Transverse colon (tissue), 4 donors: ENCODE measurements at regions of chr16 and their contacts with region 1.

Region 1: DNA sequence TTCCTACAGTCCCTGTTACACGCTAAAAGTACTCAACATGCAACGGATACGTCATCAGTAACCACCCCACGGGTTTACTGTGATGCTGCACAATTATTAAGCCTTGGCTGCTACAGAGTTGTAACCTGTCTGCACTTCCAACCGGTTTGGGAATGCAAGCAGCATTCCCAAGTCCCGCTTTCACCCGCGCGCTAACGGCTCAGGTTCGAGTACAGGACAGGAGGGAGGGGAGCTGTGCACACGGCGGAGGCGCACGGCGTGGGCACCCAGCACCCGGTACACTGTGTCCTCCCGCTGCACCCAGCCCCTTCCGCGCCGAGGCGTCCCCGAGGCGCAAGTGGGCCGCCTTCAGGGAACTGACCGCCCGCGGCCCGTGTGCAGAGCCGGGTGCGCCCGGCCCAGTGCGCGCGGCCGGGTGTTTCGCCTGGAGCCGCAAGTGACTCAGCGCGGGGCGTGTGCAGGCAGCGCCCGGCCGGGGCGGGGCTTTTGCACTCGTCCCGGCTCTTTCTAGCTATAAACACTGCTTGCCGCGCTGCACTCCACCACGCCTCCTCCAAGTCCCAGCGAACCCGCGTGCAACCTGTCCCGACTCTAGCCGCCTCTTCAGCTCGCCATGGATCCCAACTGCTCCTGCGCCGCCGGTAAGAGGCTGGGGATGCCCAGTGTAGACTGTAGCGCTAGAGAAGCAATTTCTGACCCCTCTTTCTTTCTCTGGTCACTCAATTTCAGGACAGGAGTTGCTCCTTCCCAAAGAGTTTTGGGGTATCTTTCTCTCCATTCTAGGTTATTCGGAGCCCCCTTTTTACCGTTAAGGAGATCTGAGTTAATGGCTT is at the start of gene MT2A:
- DNase-seq: peak; percentile 96
- H3K4me3 ChIP-seq: peak within 1 kb of the TSS; percentile 45 to 75 (median 56)
- H3K27ac ChIP-seq: peak within 1 kb of the TSS; percentile 87 to 91 (median 90)
- H3K4me1 ChIP-seq: peaks cover 6 to 25% (median 19%) of the 10 kb centered on the region in 4 donors
- H3K27me3 ChIP-seq: no peaks in the 10 kb centered on the region
- CTCF ChIP-seq: no peak
- EP300 ChIP-seq: peak; percentile 95
- POLR2A ChIP-seq: peak; percentile 99
- total RNA-seq, gene MT2A: 68.8 to 459 (median 89.3) TPM

Region 2: GRCh38 chr16:56625140-56625942 is 17.1 kb after region 1 on chr16 and contains the start of gene MT1E:
- in situ Hi-C with region 1: no loop called
- intact Hi-C with region 1: loop called (anchors 2 kb)
- DNase-seq: peak; percentile 83
- H3K4me3 ChIP-seq: peak within 1 kb of the TSS; percentile 38 to 61 (median 54)
- H3K27ac ChIP-seq: peak within 1 kb of the TSS; percentile 85 to 90 (median 90)
- H3K4me1 ChIP-seq: peaks cover 0 to 22% (median 17%) of the 10 kb centered on the region in 4 donors
- H3K27me3 ChIP-seq: no peaks in the 10 kb centered on the region
- CTCF ChIP-seq: no peak
- EP300 ChIP-seq: peak; percentile 91
- POLR2A ChIP-seq: peak; percentile 97
- total RNA-seq, gene MT1E: 109 to 1,058 (median 257) TPM

Region 3: GRCh38 chr16:56632156-56632847 is 24.0 kb after region 1 on chr16 and contains the start of gene MT1M:
- in situ Hi-C with region 1: no loop called
- intact Hi-C with region 1: loop called (anchors 1 kb)
- DNase-seq: peak; percentile 43
- H3K4me3 ChIP-seq: peak within 1 kb of the TSS; percentile 18 to 58 (median 45)
- H3K27ac ChIP-seq: peak within 1 kb of the TSS; percentile 53 to 74 (median 59)
- H3K4me1 ChIP-seq: peaks cover 6 to 28% (median 17%) of the 10 kb centered on the region in 4 donors
- H3K27me3 ChIP-seq: peaks cover 57% of the 10 kb centered on the region
- CTCF ChIP-seq: no peak
- EP300 ChIP-seq: peak; percentile 93
- POLR2A ChIP-seq: peak; percentile 81
- total RNA-seq, gene MT1M: 2.7 to 48.3 (median 5.2) TPM in 3 of 4 donors, not detected in the other

Region 4: DNA sequence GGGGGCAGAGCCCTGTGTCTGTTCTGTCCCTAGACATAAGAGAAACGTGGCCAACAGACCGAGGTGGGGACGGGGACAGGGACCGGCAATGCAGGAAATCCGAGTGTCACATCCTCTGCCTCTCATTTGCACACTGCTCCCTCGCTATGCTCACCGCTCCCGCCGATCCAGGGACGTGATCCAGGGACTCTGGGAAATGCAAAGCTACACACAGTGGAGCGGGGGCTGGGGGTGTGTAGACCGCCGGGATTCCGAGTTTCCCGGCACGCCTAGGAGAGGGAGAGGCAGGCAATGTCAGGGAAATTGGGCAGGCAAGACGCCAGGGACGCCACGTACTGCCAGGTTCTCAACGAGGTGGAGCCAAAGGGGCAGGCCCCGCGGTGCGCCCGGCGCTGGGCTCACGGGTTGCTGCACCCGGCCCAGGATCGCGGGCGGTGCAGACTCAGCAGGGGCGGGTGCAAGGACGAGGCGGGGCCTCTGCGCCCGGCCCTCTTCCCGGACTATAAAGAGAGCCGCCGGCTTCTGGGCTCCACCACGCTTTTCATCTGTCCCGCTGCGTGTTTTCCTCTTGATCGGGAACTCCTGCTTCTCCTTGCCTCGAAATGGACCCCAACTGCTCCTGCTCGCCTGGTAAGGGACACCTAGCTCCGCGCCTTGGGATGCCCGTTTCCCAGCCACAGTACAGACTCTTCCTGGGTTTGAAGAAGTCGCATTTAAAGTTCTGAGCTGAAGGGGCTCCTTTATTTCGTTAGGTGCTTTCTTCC is 73.9 kb after region 1 on chr16 and contains the start of gene MT1X:
- in situ Hi-C with region 1: no loop called
- intact Hi-C with region 1: loop called (anchors 5 kb)
- DNase-seq: peak; percentile 94
- H3K4me3 ChIP-seq: peak within 1 kb of the TSS; percentile 43 to 79 (median 55)
- H3K27ac ChIP-seq: peak within 1 kb of the TSS; percentile 79 to 87 (median 82)
- H3K4me1 ChIP-seq: peaks cover 3 to 20% (median 11%) of the 10 kb centered on the region in 4 donors
- H3K27me3 ChIP-seq: no peaks in the 10 kb centered on the region
- CTCF ChIP-seq: no peak
- EP300 ChIP-seq: peak; percentile 96
- POLR2A ChIP-seq: peak; percentile 97
- total RNA-seq, gene MT1X: 40.4 to 784 (median 274) TPM